ENCODE measurements at regions of chr13 and their contacts with region 1.

Region 1: GRCh38 chr13:50911937-50912795 is 2.6 kb downstream of the RNASEH2B start:
- DNase-seq: peak; percentile 86 to 90
- ATAC-seq: peak; percentile 39 to 63 (median 50)
- H3K4me3 ChIP-seq: no peak overlapping the region
- H3K27ac ChIP-seq: no peak overlapping the region
- H3K4me1 ChIP-seq: no peaks in the 10 kb centered on the region
- H3K27me3 ChIP-seq: no peaks in the 10 kb centered on the region
- CTCF ChIP-seq: peak; percentile 83

Region 2: DNA sequence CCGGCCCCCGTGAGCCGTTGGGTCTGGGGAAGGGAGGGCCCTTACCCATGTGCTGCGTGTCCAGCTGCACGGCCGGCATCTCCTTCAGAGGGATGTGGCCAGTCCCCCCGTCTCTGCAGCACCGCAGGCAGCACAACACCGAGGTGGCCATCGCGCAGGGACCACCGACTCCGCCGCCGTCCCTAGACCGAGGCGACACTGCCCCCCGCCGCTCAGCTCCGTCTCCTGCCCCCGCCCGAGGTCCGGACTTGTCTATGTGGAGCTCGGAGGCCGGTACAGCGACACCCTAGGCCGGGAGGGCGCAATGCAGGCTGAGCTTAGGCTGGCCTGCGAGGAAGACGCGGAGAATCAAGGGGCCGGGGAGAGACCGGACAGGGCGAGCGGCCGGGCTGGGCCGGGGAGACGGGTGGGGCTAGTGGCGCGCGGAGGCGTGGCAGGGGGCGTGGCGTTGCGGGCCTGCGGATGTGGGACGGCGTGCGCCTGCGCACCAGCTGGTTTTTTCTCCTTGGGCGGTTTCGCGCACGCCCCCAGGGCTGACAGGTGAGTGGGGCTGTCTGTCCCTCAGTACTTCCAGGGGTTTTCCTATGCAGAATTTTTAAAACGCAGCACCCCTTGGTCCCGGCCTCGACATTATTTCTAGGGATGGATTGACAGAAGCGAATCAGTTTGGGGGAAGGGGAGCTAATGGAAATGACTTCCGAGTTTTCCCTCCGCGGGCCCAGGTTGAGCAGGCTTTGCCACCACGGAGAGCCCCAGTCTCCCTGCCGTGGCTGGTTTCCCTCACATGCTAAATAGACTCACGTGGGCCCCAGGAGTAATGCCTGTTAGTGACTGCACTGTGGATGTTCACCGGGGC is 975.9 kb before region 1 on chr13 and contains the start of gene SPRYD7:
- intact Hi-C with region 1: loop called in 1 of 2 experiments (anchors 5 kb)
- DNase-seq: peak; percentile 98 to 99
- ATAC-seq: peak; percentile 97 to 99 (median 98)
- H3K4me3 ChIP-seq: peak within 1 kb of the TSS; percentile 90
- H3K27ac ChIP-seq: peak within 1 kb of the TSS; percentile 92
- H3K4me1 ChIP-seq: peaks cover 29% of the 10 kb centered on the region
- H3K27me3 ChIP-seq: no peaks in the 10 kb centered on the region
- CTCF ChIP-seq: peak; percentile 89
- total RNA-seq, gene SPRYD7: 12.3 to 23.8 (median 17.4) TPM

Region 3: GRCh38 chr13:49976314-49977258 is 935.6 kb before region 1 on chr13:
- intact Hi-C with region 1: loop called (anchors 5 kb)
- DNase-seq: peak; percentile 64 to 80
- ATAC-seq: peak; percentile 73 to 92 (median 86)
- H3K4me3 ChIP-seq: no peak overlapping the region
- H3K27ac ChIP-seq: no peak overlapping the region
- H3K4me1 ChIP-seq: no peaks in the 10 kb centered on the region
- H3K27me3 ChIP-seq: no peaks in the 10 kb centered on the region
- CTCF ChIP-seq: peak; percentile 90

Region 4: GRCh38 chr13:50081679-50082425 is 830.3 kb before region 1 on chr13:
- intact Hi-C with region 1: loop called in 1 of 2 experiments (anchors 10 kb)
- DNase-seq: peak; percentile 98 to 99
- ATAC-seq: peak; percentile 93 to 96 (median 95)
- H3K4me3 ChIP-seq: peak overlapping the region; percentile 77
- H3K27ac ChIP-seq: peak overlapping the region; percentile 87
- H3K4me1 ChIP-seq: peaks cover 44% of the 10 kb centered on the region
- H3K27me3 ChIP-seq: no peaks in the 10 kb centered on the region
- CTCF ChIP-seq: no peak

Region 5: DNA sequence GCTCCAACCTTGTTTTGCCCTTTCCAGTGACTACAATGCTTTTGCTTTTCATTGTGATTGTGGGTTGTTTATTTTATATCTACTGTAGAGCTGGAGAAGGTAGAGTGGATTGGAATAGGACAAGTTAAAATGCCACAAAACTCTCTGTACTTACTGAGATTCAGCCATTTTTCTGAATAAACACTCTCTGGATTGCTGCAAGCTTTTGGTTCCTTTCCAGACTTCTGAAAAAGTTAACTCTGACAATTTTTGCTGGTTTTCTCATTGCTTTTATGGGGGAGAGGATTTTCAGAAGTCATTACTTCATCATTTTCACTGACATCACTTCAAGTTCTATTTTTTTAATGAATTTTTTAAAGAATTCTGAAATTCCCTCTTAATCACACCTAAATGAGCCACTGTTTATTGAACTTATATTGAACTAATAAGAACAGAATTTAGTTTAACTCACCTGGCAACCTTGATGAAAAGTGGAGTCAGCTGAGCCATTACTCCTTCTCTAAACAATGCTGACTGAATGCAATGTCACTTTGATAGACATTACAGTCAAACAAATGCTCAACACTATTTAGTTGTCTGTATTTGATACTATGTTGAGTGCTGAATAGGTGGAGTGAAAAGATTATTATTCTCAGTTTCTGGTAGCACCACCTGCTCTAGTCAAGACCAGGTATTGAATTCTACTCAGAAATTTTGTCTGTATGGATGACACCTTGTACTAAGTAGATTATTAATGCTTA is 372.2 kb before region 1 on chr13:
- intact Hi-C with region 1: loop called in 1 of 2 experiments (anchors 5 kb)
- DNase-seq: no peak
- ATAC-seq: no peak
- H3K4me3 ChIP-seq: no peak overlapping the region
- H3K27ac ChIP-seq: no peak overlapping the region
- H3K4me1 ChIP-seq: peaks cover 7% of the 10 kb centered on the region
- H3K27me3 ChIP-seq: no peaks in the 10 kb centered on the region
- CTCF ChIP-seq: no peak